PC-9 (cell line): ENCODE measurements at regions of chr1 and their contacts with region 1.

Region 1: DNA sequence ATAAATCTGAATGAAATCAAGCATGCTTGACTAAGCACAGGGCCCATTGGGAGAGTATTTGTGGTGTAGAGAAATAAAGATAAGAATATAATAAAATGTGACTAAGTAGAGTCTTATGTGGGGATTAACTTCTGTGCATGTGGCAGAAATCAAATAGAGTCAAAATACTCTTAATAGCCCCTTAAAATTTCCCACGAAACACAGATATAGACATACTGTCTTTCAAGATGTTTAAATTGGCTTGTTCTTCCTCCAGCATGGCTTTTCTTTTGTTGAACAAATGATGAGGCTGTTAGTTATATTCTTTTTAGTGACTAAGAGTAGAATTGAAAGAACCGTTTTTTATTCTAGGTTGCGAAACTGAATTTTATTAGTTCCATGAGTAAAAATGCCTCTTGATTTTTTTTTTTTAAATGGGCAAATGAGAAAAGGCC is 112.3 kb downstream of the RPS6KC1 start:
- DNase-seq: no peak
- H3K4me3 ChIP-seq: no peak overlapping the region
- H3K27ac ChIP-seq: no peak overlapping the region
- H3K4me1 ChIP-seq: no peaks in the 10 kb centered on the region
- H3K27me3 ChIP-seq: no peaks in the 10 kb centered on the region
- CTCF ChIP-seq: no peak

Region 2: GRCh38 chr1:212951126-212951946 is 212.0 kb before region 1 on chr1:
- CTCF ChIA-PET with region 1: no interaction called
- POLR2A ChIA-PET with region 1: interaction called, 10 read pairs
- intact Hi-C with region 1: no loop called
- DNase-seq: no peak
- H3K4me3 ChIP-seq: no peak overlapping the region
- H3K27ac ChIP-seq: no peak overlapping the region
- H3K4me1 ChIP-seq: no peaks in the 10 kb centered on the region
- H3K27me3 ChIP-seq: peaks cover 20% of the 10 kb centered on the region
- CTCF ChIP-seq: no peak